Activated CD4-positive, alpha-beta memory T cell treated with anti-CD3 and anti-CD28 coated beads for 36 hours (primary cell): ENCODE measurements at regions of chr2 and their contacts with region 1.

Region 1: DNA sequence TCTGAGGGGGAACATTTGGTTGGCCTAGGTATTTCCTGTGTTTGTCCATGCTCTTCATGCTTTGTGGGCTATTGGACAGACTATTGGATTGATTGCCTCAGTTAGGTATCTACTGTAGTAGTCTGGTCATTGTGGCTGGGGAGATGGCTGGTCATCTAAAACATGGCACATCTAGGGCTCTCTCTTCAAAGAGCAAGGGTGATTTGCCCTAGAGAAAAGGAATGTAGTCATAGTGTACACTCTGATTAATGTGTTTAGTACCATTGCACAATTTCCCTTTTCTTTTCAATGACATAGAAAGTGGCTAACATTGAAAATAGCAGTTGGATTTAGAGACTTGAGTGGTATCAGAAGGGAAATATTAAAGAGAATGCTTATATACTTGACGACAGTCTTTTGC is 114.3 kb downstream of the LCLAT1 start:
- DNase-seq: no peak
- H3K4me3 Mint-ChIP-seq: no peak overlapping the region
- H3K27ac Mint-ChIP-seq: no peak overlapping the region
- H3K4me1 Mint-ChIP-seq: peaks cover 8% of the 10 kb centered on the region
- H3K27me3 Mint-ChIP-seq: no peaks in the 10 kb centered on the region

Region 2: DNA sequence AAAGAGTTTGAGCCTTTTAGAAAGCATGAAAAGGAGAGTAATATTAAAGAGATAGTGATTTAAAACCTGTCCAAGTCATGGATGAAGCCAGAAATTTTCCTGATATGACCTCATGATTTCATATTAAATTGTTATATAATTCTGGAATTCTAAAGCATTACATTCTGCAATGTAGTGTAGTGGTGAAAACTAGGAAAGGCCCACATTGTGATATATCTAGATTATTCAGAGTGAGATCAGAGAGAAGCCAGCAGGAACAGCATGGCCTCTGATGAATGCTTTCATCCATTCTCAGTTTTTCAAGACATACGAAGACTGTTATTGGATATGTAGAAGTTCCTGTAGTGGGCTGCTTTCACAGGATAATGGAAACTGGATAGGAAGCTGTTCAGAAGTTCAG is 15.5 kb before region 1 on chr2:
- CTCF ChIA-PET with region 1: no interaction called
- POLR2A ChIA-PET with region 1: no interaction called
- intact Hi-C with region 1: loop called (anchors 1 kb)
- DNase-seq: no peak
- H3K4me3 Mint-ChIP-seq: no peak overlapping the region
- H3K27ac Mint-ChIP-seq: no peak overlapping the region
- H3K4me1 Mint-ChIP-seq: peaks cover 8% of the 10 kb centered on the region
- H3K27me3 Mint-ChIP-seq: no peaks in the 10 kb centered on the region

Region 3: DNA sequence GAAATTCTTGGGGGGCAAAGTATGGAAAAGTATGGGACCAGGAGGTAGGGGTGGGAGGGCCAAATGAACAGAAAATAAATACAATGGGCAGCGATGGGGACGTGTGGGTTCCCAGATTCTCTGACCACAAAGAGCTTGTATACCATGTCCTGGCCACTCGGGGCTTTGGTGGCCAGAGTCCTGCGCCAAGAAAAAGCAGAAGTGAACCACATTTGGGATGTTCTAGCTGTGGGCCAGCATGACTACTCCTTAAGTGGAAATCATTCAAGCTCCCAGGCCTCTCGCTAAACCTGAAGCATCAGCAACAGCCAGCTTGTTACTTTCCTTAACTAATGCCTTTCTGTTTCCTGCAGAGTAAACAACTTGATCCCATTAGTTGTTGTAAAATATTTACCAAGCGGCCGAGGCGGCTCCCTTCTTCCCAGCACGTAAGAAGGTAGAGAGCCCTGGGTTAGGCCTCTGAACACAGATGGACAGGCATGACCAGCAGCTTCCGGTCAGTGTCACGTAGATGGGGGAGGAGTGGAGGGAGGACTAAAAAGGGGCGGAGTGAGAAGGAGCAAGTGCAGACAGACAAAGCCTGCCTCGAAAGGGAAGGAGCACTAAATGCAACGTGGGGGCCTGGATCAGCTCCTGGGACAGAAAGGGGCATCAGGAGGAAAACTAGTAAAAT is 488.7 kb after region 1 on chr2:
- CTCF ChIA-PET with region 1: no interaction called
- POLR2A ChIA-PET with region 1: no interaction called
- intact Hi-C with region 1: no loop called
- DNase-seq: no peak
- H3K4me3 Mint-ChIP-seq: no peak overlapping the region
- H3K27ac Mint-ChIP-seq: no peak overlapping the region
- H3K4me1 Mint-ChIP-seq: no peaks in the 10 kb centered on the region
- H3K27me3 Mint-ChIP-seq: peaks cover 6% of the 10 kb centered on the region